ENCODE measurements at regions of chr3 and their contacts with region 1.

Region 1: DNA sequence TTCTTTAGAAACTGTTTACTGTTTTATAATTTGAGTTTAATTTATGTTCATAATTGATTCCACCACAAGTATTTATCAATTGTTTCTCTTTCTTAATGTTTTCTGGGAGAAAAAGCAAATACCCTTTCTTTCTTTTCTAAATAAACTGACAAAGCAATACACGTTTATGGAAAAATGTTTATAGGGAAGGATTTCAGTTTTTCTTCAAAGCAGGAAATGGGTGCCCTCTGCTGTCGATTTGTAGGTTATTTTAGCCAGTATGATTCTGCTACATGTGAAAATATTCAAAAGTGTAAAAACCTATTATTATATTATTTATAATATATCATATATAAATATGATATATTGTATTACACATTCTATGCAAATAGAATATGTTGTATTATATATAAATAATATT is 921.0 kb upstream of the ROBO1 start:
- DNase-seq: peak; percentile 65
- H3K4me3 ChIP-seq: no peak overlapping the region
- H3K27ac ChIP-seq: no peak overlapping the region
- H3K4me1 ChIP-seq: no peaks in the 10 kb centered on the region
- H3K27me3 ChIP-seq: no peaks in the 10 kb centered on the region
- CTCF ChIP-seq: peak; percentile 8 to 30
- POLR2A ChIP-seq: no peak

Region 2: DNA sequence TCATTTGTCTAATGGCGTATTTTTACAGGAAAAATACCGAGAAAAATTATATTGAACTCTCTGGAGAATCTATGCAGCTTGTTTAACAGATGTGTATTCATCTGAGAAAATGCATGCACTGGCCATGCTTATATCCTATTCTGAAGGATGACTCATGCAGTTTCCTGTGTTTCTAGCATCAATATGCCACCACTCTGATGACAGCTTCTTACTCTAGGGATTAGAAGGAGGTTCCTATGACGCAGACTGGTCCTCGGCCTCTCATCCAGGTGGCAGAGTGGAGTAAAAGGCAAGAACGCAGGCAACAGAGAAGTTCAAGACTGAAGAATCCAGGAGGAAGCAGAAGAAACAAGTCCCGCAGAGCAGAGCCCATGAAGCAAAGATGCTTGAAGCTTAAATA is 11.0 kb before region 1 on chr3:
- CTCF ChIA-PET with region 1: interaction called, 11 read pairs
- POLR2A ChIA-PET with region 1: no interaction called
- dilution Hi-C with region 1: no loop called
- intact Hi-C with region 1: no loop called
- DNase-seq: peak; percentile 62
- H3K4me3 ChIP-seq: no peak overlapping the region
- H3K27ac ChIP-seq: no peak overlapping the region
- H3K4me1 ChIP-seq: no peaks in the 10 kb centered on the region
- H3K27me3 ChIP-seq: no peaks in the 10 kb centered on the region
- CTCF ChIP-seq: no peak
- POLR2A ChIP-seq: no peak

Region 3: GRCh38 chr3:81086348-81086747 is 397.5 kb after region 1 on chr3:
- CTCF ChIA-PET with region 1: no interaction called
- POLR2A ChIA-PET with region 1: no interaction called
- dilution Hi-C with region 1: no loop called
- intact Hi-C with region 1: no loop called
- DNase-seq: no peak
- H3K4me3 ChIP-seq: no peak overlapping the region
- H3K27ac ChIP-seq: no peak overlapping the region
- H3K4me1 ChIP-seq: no peaks in the 10 kb centered on the region
- H3K27me3 ChIP-seq: no peaks in the 10 kb centered on the region
- CTCF ChIP-seq: no peak
- POLR2A ChIP-seq: no peak

Measured in endothelial cell of umbilical vein (primary cell).